OCI-LY7 (cell line): ENCODE measurements at regions of chr11 and their contacts with region 1.

Region 1: DNA sequence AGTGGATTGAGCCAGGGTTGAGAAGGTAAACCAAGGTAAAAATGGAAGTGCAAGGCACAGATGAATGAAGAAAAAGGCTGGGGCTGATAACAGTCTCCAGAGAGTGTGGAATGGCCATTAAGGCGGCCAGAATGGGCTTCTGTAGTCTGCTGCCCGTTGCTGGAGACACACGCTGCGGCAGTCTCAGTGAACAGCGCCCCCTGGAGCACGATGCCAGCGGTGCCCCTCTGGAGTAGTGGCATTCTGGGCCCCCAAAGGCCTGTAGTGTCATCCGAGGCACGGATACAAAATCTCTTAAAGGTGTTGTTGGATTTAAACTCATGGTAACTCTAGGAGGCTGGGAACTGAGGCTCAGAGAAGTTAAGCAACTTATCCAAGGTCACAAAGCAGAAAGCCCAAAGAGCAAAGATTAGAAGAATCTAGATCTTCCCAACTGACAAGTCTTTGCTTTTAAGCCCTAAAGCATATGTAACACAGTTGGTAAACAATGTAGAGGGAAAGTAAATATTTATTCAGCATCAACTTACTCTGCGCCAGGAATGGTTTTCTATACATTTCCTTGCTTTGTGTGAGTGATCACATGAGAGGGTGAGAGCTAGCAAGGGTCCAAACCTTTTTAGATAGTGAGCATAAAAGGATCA is 18.2 kb downstream of the KCNJ1 start:
- DNase-seq: peak; percentile 79
- H3K4me3 ChIP-seq: no peak overlapping the region
- H3K27ac ChIP-seq: peak overlapping the region; percentile 23
- H3K4me1 ChIP-seq: peaks cover 29% of the 10 kb centered on the region
- CTCF ChIP-seq: peak; percentile 98

Region 2: GRCh38 chr11:128859563-128860441 is 10.9 kb after region 1 on chr11:
- CTCF ChIA-PET with region 1: interaction called, 3 read pairs
- POLR2A ChIA-PET with region 1: interaction called, 11 read pairs
- intact Hi-C with region 1: no loop called
- DNase-seq: peak; percentile 78
- H3K4me3 ChIP-seq: no peak overlapping the region
- H3K27ac ChIP-seq: no peak overlapping the region
- H3K4me1 ChIP-seq: peaks cover 8% of the 10 kb centered on the region
- CTCF ChIP-seq: peak; percentile 98